Activated naive CD4-positive, alpha-beta T cell treated with anti-CD3 and anti-CD28 coated beads for 36 hours (primary cell): ENCODE measurements at regions of chr5 and their contacts with region 1.

Region 1: DNA sequence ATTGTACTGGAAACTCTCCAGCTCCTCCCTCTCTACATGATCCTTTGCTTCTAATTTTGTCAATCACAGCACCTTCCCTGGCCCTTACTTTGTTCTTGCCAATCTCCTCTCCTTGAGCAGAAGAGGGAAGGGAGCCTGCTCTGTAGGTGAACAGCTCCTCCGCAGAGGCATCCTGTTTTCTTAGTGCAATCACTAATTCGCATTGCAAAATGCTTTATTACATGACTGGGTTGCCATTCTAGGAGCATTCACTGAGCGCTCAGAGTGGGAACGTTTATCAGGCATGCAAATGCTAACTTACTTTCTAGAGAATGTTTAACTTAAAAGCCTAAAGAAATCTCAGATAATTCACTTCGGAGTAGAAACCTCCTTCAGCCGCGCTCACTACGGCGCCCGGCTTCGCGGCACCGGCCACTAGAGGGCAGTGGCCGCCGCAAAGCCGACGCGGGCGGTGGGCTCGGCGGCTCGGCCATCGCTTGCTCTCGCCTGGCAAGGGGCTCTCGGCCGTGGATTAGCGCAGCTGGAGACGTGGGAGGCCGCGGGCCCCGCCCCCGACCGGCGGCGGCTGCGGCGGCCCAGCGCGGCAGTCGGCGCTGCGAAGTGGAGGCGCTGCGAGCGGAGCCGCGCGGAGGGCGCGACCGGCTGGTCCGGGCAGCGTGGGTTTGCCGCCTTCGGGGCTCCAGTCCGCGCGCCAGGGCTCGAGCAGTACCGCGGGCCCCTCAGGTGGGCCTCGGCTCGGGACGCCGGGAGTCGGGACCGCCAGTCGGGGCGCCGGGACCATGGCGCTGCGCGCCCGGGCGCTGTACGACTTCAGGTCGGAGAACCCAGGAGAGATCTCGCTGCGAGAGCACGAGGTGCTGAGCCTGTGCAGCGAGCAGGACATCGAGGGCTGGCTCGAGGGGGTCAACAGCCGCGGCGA is at the start of gene SNX18:
- DNase-seq: peak; percentile 91
- H3K4me3 Mint-ChIP-seq: peak within 1 kb of the TSS; percentile 56
- H3K27ac Mint-ChIP-seq: no peak within 1 kb of the TSS
- H3K4me1 Mint-ChIP-seq: peaks cover 38% of the 10 kb centered on the region
- H3K27me3 Mint-ChIP-seq: no peaks in the 10 kb centered on the region
- total RNA-seq, gene SNX18: 3.9 to 4.4 TPM

Region 2: DNA sequence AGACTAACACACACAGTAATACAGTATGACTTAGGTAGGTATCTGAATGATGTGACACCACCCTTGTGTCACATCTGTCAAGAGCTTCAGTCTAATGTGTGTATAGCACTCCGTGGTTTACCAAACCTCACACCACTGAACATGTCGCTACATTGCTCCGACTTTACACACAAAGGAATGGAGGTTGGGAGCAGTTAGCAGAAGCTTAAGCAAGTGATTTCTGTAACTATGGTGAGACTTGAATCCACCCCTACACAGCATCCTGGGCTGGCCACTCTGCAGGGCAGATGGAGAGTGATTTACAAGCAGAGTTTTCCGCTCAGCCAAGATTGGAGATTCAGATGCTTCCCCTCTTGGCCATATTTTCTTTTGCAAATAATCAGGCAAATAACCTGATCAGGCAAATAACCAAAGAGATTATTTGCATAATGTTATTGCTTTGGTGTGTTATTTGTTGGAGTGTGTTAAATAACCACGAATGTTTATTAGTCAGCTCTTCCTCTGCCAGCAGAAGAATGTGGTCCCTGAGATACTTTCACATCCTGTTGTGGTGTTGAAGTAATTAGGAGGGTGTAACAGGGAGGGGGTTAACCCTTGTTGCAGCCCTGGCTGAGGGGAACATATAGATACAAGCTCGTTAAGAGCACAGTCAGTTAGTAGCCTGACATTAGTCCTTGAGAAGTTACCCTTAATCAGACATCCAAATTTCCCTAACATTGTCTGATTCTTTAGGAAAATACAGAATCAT is 92.9 kb after region 1 on chr5:
- CTCF ChIA-PET with region 1: no interaction called
- intact Hi-C with region 1: no loop called
- DNase-seq: peak; percentile 20
- H3K4me3 Mint-ChIP-seq: no peak overlapping the region
- H3K27ac Mint-ChIP-seq: no peak overlapping the region
- H3K4me1 Mint-ChIP-seq: peaks cover 19% of the 10 kb centered on the region
- H3K27me3 Mint-ChIP-seq: no peaks in the 10 kb centered on the region

Region 3: DNA sequence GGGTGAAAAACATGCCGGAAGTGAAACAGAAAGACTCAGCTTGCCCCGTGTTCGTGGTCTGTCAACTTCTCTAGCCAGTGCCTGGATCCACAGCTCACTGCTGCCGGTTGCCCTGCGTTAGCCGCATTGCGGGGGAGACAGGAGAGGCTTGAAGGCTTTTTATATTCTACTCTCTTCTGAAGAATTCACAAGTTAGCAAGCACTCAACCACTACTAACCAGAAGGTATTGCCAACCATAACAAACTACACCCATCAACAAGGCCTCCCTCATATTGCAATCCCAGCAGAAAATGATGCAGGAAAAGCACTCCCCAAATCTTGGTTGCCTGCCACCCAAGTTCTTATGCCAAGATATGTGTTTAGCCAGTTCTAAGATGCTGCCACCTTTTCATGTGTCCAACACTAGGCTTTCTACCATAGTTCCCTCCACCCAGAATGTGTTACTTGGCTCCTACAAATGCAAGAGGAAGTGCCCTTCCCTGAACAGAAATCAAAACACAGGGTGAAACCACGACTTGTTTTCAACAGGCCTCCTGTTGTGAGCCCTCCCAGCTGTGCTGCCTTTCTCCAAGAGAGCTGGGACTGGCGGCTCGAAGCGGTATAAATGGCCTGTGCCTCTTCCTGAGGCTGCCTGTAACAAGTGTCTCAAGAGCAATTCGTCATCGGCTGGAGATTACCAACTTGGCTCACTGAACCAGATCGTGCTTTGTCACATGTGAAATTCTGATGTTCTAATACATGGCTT is 129.1 kb after region 1 on chr5:
- CTCF ChIA-PET with region 1: interaction called, 6 read pairs
- intact Hi-C with region 1: loop called (anchors 1 kb)
- DNase-seq: peak; percentile 70
- H3K4me3 Mint-ChIP-seq: peak overlapping the region; percentile 53
- H3K27ac Mint-ChIP-seq: peak overlapping the region; percentile 71
- H3K4me1 Mint-ChIP-seq: peaks cover 51% of the 10 kb centered on the region
- H3K27me3 Mint-ChIP-seq: no peaks in the 10 kb centered on the region

Region 4: GRCh38 chr5:54696931-54697330 is 179.5 kb after region 1 on chr5:
- CTCF ChIA-PET with region 1: no interaction called
- intact Hi-C with region 1: no loop called
- DNase-seq: no peak
- H3K4me3 Mint-ChIP-seq: no peak overlapping the region
- H3K27ac Mint-ChIP-seq: no peak overlapping the region
- H3K4me1 Mint-ChIP-seq: no peaks in the 10 kb centered on the region
- H3K27me3 Mint-ChIP-seq: no peaks in the 10 kb centered on the region

Region 5: DNA sequence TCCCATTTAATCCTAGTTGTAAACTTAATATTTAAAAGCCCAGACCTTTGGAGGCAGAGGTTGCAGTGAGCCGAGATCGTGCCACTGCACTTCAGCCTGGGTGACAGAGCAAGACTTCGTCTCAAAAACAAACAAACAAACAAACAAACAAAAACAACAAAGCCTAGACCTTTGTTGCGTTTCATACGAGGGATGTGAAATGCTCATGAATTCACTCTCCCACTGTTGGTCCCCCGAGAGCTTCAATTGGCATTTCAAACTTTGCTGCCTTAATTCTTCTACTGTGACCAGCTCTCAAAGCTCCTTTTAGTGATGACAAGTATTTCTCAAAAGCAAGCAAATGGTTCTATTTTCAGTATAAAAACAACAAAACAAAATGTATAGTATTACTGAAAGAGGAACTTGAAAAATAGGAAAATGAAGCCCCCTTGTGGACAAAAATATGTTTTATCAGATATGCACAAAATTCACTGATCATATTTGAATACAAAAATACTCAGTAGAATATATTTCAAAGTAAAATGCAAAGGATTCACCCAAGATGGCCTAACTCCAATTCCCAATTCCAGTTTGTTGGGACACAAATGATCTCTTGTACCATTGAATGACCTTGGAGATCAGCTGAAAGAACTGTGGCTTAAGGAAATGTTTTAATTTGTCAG is 327.6 kb after region 1 on chr5:
- CTCF ChIA-PET with region 1: interaction called, 88 read pairs
- intact Hi-C with region 1: loop called (anchors 1 kb)
- DNase-seq: no peak
- H3K4me3 Mint-ChIP-seq: no peak overlapping the region
- H3K27ac Mint-ChIP-seq: no peak overlapping the region
- H3K4me1 Mint-ChIP-seq: peaks cover 3% of the 10 kb centered on the region
- H3K27me3 Mint-ChIP-seq: peaks cover 7% of the 10 kb centered on the region

Region 6: GRCh38 chr5:54895816-54896341 is 378.4 kb after region 1 on chr5:
- CTCF ChIA-PET with region 1: interaction called, 11 read pairs
- intact Hi-C with region 1: loop called (anchors 2 kb)
- DNase-seq: peak; percentile 37
- H3K4me3 Mint-ChIP-seq: no peak overlapping the region
- H3K27ac Mint-ChIP-seq: no peak overlapping the region
- H3K4me1 Mint-ChIP-seq: peaks cover 5% of the 10 kb centered on the region
- H3K27me3 Mint-ChIP-seq: peaks cover 36% of the 10 kb centered on the region

Region 7: GRCh38 chr5:55159763-55160492 is 642.5 kb after region 1 on chr5 and contains the start of gene GPX8:
- CTCF ChIA-PET with region 1: interaction called, 5 read pairs
- intact Hi-C with region 1: loop called (anchors 1 kb)
- DNase-seq: peak; percentile 29
- H3K4me3 Mint-ChIP-seq: no peak within 1 kb of the TSS
- H3K27ac Mint-ChIP-seq: no peak within 1 kb of the TSS
- H3K4me1 Mint-ChIP-seq: no peaks in the 10 kb centered on the region
- H3K27me3 Mint-ChIP-seq: peaks cover 18% of the 10 kb centered on the region
- total RNA-seq, gene GPX8: not detected